Calu3 (cell line): ENCODE measurements at regions of chr17 and their contacts with region 1.

Region 1: DNA sequence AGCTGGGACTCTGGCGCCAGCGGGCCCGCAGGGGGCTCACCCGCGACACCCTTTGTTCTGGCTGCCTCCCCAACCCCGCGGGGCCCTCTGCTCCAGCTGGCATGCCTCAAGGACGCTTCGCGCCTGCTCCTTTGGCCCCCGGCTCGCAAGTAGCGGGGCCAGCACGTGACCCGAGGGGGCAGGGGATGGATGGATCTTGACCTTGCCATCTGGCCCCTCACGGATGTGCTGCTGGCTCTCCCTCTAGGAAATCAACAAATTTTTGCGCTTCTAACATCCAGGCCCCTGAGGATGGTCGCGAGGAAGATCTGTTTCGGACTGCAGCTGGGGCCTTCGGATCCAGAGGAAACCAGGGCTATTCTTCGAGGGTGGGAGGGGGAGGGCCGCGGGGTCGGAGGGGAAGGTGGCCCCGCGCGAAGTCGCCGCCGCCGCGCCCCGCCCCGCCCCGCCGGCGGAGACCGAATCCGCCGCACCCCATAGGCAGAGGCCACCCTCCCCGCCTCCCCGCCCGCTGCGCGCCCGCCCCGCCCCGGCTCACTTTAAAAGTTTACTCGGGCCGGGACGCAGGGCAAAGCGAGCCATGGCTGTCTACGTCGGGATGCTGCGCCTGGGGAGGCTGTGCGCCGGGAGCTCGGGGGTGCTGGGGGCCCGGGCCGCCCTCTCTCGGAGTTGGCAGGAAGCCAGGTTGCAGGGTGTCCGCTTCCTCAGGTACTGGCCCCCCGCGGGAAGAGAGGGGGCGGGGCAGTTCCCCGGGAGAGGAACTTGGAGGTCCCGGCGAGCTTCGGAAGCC is at the start of gene ACSF2:
- DNase-seq: peak; percentile 87
- H3K4me3 Mint-ChIP-seq: peak within 1 kb of the TSS; percentile 87
- H3K27ac Mint-ChIP-seq: peak within 1 kb of the TSS; percentile 88
- H3K4me1 Mint-ChIP-seq: peaks cover 73% of the 10 kb centered on the region
- H3K27me3 Mint-ChIP-seq: no peaks in the 10 kb centered on the region
- CTCF ChIP-seq: no peak
- total RNA-seq, gene ACSF2: 148 and 156 TPM in 2 replicates

Region 2: GRCh38 chr17:50443368-50443971 is 17.6 kb after region 1 on chr17:
- CTCF ChIA-PET with region 1: interaction called, 6 read pairs
- intact Hi-C with region 1: loop called (anchors 2 kb)
- DNase-seq: no peak
- H3K4me3 Mint-ChIP-seq: peak overlapping the region; percentile 20
- H3K27ac Mint-ChIP-seq: peak overlapping the region; percentile 62
- H3K4me1 Mint-ChIP-seq: peaks cover 52% of the 10 kb centered on the region
- H3K27me3 Mint-ChIP-seq: no peaks in the 10 kb centered on the region
- CTCF ChIP-seq: no peak

Region 3: GRCh38 chr17:50638851-50639767 is 213.2 kb after region 1 on chr17:
- CTCF ChIA-PET with region 1: no interaction called
- intact Hi-C with region 1: no loop called
- DNase-seq: peak; percentile 98
- H3K4me3 Mint-ChIP-seq: peak overlapping the region; percentile 69
- H3K27ac Mint-ChIP-seq: peak overlapping the region; percentile 37
- H3K4me1 Mint-ChIP-seq: peaks cover 70% of the 10 kb centered on the region
- H3K27me3 Mint-ChIP-seq: peaks cover under 1% of the 10 kb centered on the region
- CTCF ChIP-seq: no peak

Region 4: DNA sequence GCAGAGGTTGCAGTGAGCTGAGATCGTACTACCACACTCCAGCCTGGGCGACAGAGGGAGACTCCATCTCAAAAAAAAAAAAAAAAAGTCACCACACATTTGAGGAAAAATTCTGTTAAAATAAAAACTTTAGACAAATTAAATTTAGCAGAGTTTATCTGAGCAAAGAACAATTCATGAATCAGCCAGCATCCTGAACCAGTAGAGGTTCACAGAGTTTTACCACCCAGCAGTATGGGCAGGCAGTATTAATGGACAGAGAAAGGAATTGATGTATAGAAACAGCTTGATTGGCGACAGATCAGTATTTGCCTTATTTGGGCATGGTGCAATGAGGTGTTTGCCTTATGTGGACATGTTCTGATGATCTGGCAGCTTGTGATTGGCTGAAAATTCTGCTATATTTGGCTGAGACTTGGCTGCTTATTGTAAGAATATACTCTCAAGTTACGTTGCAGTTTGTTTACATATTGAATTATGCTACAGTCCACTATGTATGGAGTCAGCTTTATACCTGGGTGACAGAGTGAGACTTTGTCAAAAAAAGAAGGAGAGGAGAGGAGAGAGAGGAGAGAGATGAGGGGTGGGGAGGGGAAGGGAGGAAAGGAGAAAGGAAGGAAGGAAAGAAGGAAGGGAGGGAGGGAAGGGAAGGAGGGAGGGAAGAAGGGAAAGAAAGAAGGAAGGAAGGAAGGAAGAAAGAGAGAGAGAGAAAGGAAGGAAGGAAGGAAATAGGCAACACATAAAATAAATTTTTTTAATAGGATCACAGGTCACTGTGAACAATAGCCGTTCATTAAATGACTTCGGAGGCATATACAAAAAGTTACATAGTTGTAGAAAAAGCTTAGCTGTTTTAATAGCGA is 223.4 kb after region 1 on chr17:
- CTCF ChIA-PET with region 1: interaction called, 15 read pairs
- intact Hi-C with region 1: no loop called
- DNase-seq: no peak
- H3K4me3 Mint-ChIP-seq: no peak overlapping the region
- H3K27ac Mint-ChIP-seq: no peak overlapping the region
- H3K4me1 Mint-ChIP-seq: peaks cover 17% of the 10 kb centered on the region
- H3K27me3 Mint-ChIP-seq: no peaks in the 10 kb centered on the region
- CTCF ChIP-seq: no peak